GM10248 (cell line): ENCODE measurements at regions of chr1 and their contacts with region 1.

Region 1: GRCh38 chr1:173224280-173224892 is 17.3 kb upstream of the TNFSF4 start:
- DNase-seq: no peak
- CTCF ChIP-seq: no peak

Region 2: GRCh38 chr1:173112129-173112528 is 112.3 kb before region 1 on chr1:
- CTCF ChIA-PET with region 1: no interaction called
- POLR2A ChIA-PET with region 1: no interaction called
- DNase-seq: peak; percentile 22
- CTCF ChIP-seq: no peak

Region 3: DNA sequence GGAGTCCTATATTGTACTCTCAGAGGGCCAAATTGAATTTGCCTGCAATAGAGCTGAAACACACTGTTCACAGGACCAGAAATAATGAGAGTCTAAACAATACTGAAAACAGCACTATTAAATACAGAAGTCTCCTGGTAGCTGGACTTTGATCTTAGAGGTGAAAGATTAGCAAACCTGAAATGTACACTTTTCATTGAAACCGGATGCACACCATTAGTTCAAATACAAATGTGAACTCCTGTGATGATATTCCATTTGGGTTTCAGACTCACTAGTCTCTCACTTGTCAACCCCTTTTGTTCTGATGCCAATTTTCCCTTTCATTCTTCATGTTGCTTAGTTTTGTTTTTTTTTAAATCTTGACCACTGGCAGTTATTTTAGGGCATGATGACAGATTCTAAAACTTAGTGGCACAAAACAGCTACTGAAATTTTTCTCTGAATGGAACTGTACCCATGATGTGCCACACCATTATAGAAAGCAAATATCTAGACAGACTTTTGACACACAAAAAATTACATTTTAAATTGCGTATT is 11.4 kb before region 1 on chr1:
- CTCF ChIA-PET with region 1: interaction called, 18 read pairs
- POLR2A ChIA-PET with region 1: no interaction called
- DNase-seq: peak; percentile 53
- CTCF ChIP-seq: no peak